B cell (primary cell): ENCODE measurements at regions of chr3 and their contacts with region 1.

Region 1: DNA sequence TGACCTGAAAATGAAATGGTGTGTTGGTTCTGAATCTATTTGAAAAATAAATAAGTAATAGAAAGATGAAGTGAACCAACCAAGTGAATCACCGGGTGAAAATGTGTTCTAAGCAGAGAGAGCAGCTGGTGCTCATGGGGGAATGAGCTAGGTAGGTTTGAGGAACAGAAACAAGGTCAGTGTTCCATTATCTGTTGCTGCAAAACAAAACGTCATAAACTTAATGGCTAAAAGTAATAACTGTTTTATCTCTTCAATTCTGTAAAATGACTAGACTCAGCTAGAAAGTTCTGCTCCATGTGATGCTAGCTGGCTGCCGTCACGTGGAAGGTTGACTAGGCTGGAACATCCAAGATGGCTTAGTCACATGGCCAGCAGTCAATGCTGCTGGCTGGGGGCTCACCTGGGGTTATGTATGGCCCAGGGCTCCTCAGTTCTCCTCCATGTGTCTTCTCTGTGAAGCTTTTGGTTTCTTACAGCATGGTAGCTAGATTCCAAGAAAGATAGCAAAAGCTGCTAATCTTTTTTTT is 13.3 kb upstream of the SH3BP5 start:
- DNase-seq: peak; percentile 87
- ATAC-seq: peak; percentile 89
- H3K4me3 ChIP-seq: peak overlapping the region in 1 of 5 experiments; percentile 7
- H3K4me3 Mint-ChIP-seq: peak overlapping the region; percentile 76
- H3K27ac ChIP-seq: peak overlapping the region; percentile 92 to 94
- H3K27ac Mint-ChIP-seq: peak overlapping the region; percentile 99
- H3K4me1 ChIP-seq: peaks cover 73 to 80% of the 10 kb centered on the region in 2 donors
- H3K4me1 Mint-ChIP-seq: peaks cover 71% of the 10 kb centered on the region
- H3K27me3 ChIP-seq: no peaks in the 10 kb centered on the region
- H3K27me3 Mint-ChIP-seq: no peaks in the 10 kb centered on the region
- CTCF ChIP-seq: no peak

Region 2: GRCh38 chr3:15291589-15292541 is 53.8 kb before region 1 on chr3:
- CTCF ChIA-PET with region 1: interaction called, 4 read pairs
- POLR2A ChIA-PET with region 1: interaction called, 6 read pairs
- intact Hi-C with region 1: loop called (anchors 1 kb)
- DNase-seq: peak; percentile 87
- ATAC-seq: peak; percentile 80
- H3K4me3 ChIP-seq: peak overlapping the region in 3 of 5 experiments; percentile 5 to 30 (median 27)
- H3K4me3 Mint-ChIP-seq: peak overlapping the region; percentile 83
- H3K27ac ChIP-seq: peak overlapping the region; percentile 58 to 87
- H3K27ac Mint-ChIP-seq: peak overlapping the region; percentile 97
- H3K4me1 ChIP-seq: peaks cover 96 to 99% of the 10 kb centered on the region in 2 donors
- H3K4me1 Mint-ChIP-seq: peaks cover 89% of the 10 kb centered on the region
- H3K27me3 ChIP-seq: no peaks in the 10 kb centered on the region
- H3K27me3 Mint-ChIP-seq: no peaks in the 10 kb centered on the region
- CTCF ChIP-seq: no peak

Region 3: GRCh38 chr3:15356186-15356585 is 10.5 kb after region 1 on chr3:
- CTCF ChIA-PET with region 1: interaction called, 17 read pairs
- POLR2A ChIA-PET with region 1: interaction called, 13 read pairs
- intact Hi-C with region 1: loop called (anchors 1 kb)
- DNase-seq: no peak
- ATAC-seq: no peak
- H3K4me3 ChIP-seq: peak overlapping the region in 1 of 5 experiments; percentile 27
- H3K4me3 Mint-ChIP-seq: peak overlapping the region; percentile 79
- H3K27ac ChIP-seq: peak overlapping the region; percentile 48 to 81
- H3K27ac Mint-ChIP-seq: peak overlapping the region; percentile 94
- H3K4me1 ChIP-seq: peaks cover 48 to 61% of the 10 kb centered on the region in 2 donors
- H3K4me1 Mint-ChIP-seq: peaks cover 52% of the 10 kb centered on the region
- H3K27me3 ChIP-seq: no peaks in the 10 kb centered on the region
- H3K27me3 Mint-ChIP-seq: no peaks in the 10 kb centered on the region
- CTCF ChIP-seq: no peak

Region 4: GRCh38 chr3:15361494-15362212 is 16.0 kb after region 1 on chr3:
- CTCF ChIA-PET with region 1: interaction called, 17 read pairs
- POLR2A ChIA-PET with region 1: interaction called, 13 read pairs
- intact Hi-C with region 1: loop called (anchors 1 kb)
- DNase-seq: peak; percentile 64
- ATAC-seq: peak; percentile 66
- H3K4me3 ChIP-seq: peak overlapping the region; percentile 5 to 54 (median 19)
- H3K4me3 Mint-ChIP-seq: peak overlapping the region; percentile 76
- H3K27ac ChIP-seq: peak overlapping the region; percentile 95 to 96
- H3K27ac Mint-ChIP-seq: peak overlapping the region; percentile 80
- H3K4me1 ChIP-seq: peaks cover 48 to 63% of the 10 kb centered on the region in 2 donors
- H3K4me1 Mint-ChIP-seq: peaks cover 59% of the 10 kb centered on the region
- H3K27me3 ChIP-seq: no peaks in the 10 kb centered on the region
- H3K27me3 Mint-ChIP-seq: no peaks in the 10 kb centered on the region
- CTCF ChIP-seq: no peak